Colonic mucosa (tissue), 4 donors: ENCODE measurements at regions of chr2 and their contacts with region 1.

Region 1: GRCh38 chr2:112626604-112627059 is 19.1 kb upstream of the SLC20A1 start:
- DNase-seq: peak; percentile 56
- H3K4me3 ChIP-seq: no peak overlapping the region
- H3K27ac ChIP-seq: peak overlapping the region; percentile 24
- H3K4me1 ChIP-seq: peaks cover 6% of the 10 kb centered on the region
- H3K27me3 ChIP-seq: no peaks in the 10 kb centered on the region
- CTCF ChIP-seq: peak; percentile 83

Region 2: GRCh38 chr2:112688086-112688805 is 61.6 kb after region 1 on chr2:
- intact Hi-C with region 1: loop called (anchors 2 kb)
- DNase-seq: peak; percentile 44
- H3K4me3 ChIP-seq: no peak overlapping the region
- H3K27ac ChIP-seq: peak overlapping the region; percentile 40
- H3K4me1 ChIP-seq: peaks cover 5% of the 10 kb centered on the region
- H3K27me3 ChIP-seq: no peaks in the 10 kb centered on the region
- CTCF ChIP-seq: no peak